Endothelial cell of umbilical vein (primary cell): ENCODE measurements at regions of chr12 and their contacts with region 1.

Region 1: DNA sequence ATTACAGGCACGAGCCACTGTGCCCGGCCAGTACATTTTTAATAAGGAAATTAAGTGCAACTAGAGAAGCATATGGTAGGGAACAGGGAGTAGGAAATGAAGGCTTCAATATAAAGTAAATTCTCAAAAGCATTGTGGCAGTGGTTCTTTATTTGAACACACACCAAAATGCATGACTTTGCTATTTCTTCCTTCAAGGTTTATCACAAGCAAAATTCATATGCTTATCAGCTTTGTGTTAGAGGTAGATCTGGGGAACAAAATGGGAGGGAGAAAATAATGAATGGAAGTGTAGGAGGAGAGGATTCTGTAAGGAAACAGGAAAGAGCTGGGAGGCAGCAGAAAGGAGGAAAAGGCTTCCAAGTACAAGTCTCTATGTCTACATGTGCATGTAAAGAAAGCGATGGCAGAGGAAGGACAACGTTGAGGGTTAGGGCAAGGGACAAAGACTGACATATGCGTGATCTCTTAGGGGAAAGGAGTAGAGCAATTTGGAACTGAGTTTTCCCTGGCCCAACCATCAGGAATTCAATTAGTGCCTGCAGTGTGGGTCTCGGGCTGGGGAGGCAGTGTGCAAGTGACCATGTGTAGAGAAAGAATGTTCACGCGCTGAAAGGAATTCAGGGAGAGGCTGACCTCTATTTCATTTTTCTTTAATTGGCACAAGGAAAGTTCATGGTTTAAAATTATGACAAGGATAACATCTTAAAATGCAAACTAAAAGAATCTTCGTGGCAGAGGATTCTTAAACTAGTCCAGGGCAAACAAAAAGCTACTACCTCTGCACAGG is 22.9 kb upstream of the RASSF8 start:
- DNase-seq: no peak
- H3K4me3 ChIP-seq: no peak overlapping the region
- H3K27ac ChIP-seq: no peak overlapping the region
- H3K4me1 ChIP-seq: no peaks in the 10 kb centered on the region
- H3K27me3 ChIP-seq: no peaks in the 10 kb centered on the region
- CTCF ChIP-seq: no peak
- POLR2A ChIP-seq: no peak

Region 2: DNA sequence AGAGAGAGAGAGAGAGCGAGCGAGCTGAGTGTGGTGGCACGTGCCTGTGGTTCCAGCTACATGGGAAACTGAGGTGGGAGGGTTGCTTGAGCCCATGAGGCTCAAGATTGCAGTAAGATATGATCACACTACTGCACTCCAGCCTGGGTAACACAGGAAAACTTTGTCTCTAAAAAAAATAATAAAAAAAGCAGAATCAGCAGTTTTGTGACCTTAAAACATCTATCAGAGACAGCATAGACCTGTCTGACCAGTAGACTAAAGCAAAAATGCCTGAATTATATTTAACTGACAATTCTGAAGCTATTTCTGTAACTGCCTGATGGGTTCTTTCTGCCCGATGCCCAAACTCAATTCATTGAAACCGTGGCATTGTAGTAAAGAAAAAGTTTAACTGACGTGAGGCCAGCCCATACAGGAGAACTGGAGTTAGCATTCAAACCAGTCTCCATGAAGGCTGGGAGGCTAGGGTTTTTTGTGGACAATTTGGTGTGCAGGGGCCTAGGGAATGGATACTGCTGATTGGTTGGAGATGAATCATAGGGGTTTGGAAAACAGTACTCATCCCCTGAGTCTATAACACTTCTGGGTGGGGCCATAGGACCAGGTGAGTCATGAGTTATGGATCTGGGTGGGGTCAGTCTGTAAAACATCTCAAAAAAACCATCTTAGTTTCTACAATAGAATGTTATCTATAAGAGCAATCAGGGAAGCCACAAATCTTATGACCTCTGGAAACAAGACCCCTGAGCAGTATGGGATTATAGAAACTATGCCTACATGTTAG is 15.0 kb after region 1 on chr12:
- CTCF ChIA-PET with region 1: interaction called, 3 read pairs
- POLR2A ChIA-PET with region 1: interaction called, 10 read pairs
- dilution Hi-C with region 1: no loop called
- intact Hi-C with region 1: no loop called
- DNase-seq: no peak
- H3K4me3 ChIP-seq: no peak overlapping the region
- H3K27ac ChIP-seq: no peak overlapping the region
- H3K4me1 ChIP-seq: no peaks in the 10 kb centered on the region
- H3K27me3 ChIP-seq: no peaks in the 10 kb centered on the region
- CTCF ChIP-seq: no peak
- POLR2A ChIP-seq: no peak

Region 3: DNA sequence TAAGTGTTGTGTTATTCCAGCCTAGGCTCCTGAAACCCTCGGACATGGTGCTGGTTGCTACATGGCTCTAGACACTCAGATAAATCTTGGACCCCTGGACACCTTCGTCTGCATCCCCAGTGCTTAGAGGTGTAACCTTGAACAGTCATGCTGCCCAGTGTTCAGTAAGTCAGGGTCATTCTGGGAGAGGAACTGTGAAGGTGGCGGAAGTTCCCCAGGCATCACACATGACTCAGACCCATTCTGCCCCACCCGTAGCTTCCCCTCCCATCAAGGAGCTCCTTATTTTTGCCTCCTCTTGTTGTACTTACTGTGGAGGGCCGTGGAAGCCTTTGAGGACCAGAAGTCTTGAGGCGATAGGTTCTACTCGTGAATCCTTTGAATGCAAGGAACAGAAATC is 241.7 kb after region 1 on chr12:
- CTCF ChIA-PET with region 1: no interaction called
- POLR2A ChIA-PET with region 1: no interaction called
- dilution Hi-C with region 1: no loop called
- intact Hi-C with region 1: no loop called
- DNase-seq: no peak
- H3K4me3 ChIP-seq: no peak overlapping the region
- H3K27ac ChIP-seq: no peak overlapping the region
- H3K4me1 ChIP-seq: no peaks in the 10 kb centered on the region
- H3K27me3 ChIP-seq: peaks cover 18 to 25% of the 10 kb centered on the region in 2 experiments
- CTCF ChIP-seq: no peak
- POLR2A ChIP-seq: no peak

Region 4: GRCh38 chr12:26226629-26227360 is 291.2 kb after region 1 on chr12:
- CTCF ChIA-PET with region 1: no interaction called
- POLR2A ChIA-PET with region 1: no interaction called
- dilution Hi-C with region 1: no loop called
- intact Hi-C with region 1: no loop called
- DNase-seq: peak; percentile 21
- H3K4me3 ChIP-seq: peak overlapping the region; percentile 30 to 56 (median 51)
- H3K27ac ChIP-seq: no peak overlapping the region
- H3K4me1 ChIP-seq: peaks cover 5% of the 10 kb centered on the region
- H3K27me3 ChIP-seq: peaks cover 0 to 7% of the 10 kb centered on the region in 2 experiments
- CTCF ChIP-seq: no peak
- POLR2A ChIP-seq: no peak

Region 5: GRCh38 chr12:26318661-26319068 is 383.1 kb after region 1 on chr12:
- CTCF ChIA-PET with region 1: no interaction called
- POLR2A ChIA-PET with region 1: no interaction called
- dilution Hi-C with region 1: no loop called
- intact Hi-C with region 1: no loop called
- DNase-seq: peak; percentile 44
- H3K4me3 ChIP-seq: no peak overlapping the region
- H3K27ac ChIP-seq: peak overlapping the region; percentile 72
- H3K4me1 ChIP-seq: peaks cover 13% of the 10 kb centered on the region
- H3K27me3 ChIP-seq: no peaks in the 10 kb centered on the region
- CTCF ChIP-seq: no peak
- POLR2A ChIP-seq: no peak